ENCODE measurements at regions of chr21 and their contacts with region 1.

Region 1: GRCh38 chr21:14523234-14523633 is 22.9 kb downstream of the SAMSN1 start:
- DNase-seq: peak; percentile 35
- H3K4me3 Mint-ChIP-seq: peak overlapping the region; percentile 68
- H3K27ac Mint-ChIP-seq: peak overlapping the region; percentile 91
- H3K4me1 Mint-ChIP-seq: peaks cover 72% of the 10 kb centered on the region
- H3K27me3 Mint-ChIP-seq: no peaks in the 10 kb centered on the region

Region 2: GRCh38 chr21:14382835-14383594 is 140.2 kb before region 1 on chr21 and contains the start of gene HSPA13:
- intact Hi-C with region 1: loop called (anchors 2 kb)
- DNase-seq: peak; percentile 99
- H3K4me3 Mint-ChIP-seq: peak within 1 kb of the TSS; percentile 100
- H3K27ac Mint-ChIP-seq: peak within 1 kb of the TSS; percentile 100
- H3K4me1 Mint-ChIP-seq: peaks cover 52% of the 10 kb centered on the region
- H3K27me3 Mint-ChIP-seq: peaks cover 2% of the 10 kb centered on the region
- total RNA-seq, gene HSPA13: 43.6 and 50.4 TPM in 2 replicates

Region 3: DNA sequence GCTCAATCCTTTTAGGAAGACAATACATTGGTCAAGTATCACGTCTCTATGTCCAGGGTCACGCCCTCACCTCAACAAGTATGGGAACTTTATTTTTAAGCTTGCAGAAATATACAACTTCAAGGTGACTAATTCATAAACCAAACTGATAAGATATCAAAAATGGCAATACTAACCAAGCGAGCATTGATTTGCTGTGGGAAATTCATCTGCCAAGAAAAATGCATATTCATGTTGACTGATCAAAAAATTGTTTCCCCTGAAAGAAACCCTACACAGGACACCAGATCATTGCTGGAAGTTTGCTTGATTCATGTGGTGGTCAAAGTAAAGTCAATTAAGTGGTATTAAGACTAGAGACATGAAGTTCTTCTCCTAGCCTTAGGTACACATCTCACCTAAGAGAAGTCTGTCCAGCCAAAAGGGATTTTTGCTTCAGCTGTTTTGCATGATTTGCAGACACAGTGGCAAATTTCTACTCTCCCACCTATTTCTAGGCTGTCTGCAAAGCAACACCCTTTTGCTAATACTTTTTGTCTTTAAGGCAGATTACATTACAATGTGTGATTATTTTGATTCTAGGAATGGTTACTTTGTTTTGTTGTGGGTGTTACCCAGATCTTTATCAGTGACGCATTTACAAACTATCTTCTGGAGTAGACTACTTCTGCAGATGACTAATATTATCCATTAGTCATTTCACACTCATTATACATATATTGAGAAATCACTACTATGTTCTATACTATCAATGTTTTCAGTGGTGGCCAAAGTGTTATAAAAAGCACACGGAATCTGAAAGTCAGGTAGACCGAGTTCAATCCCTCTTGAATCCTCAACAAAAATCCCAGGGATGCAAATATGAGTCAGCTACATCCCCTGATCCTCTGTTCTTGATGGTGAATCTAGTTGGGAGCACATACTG is 10.5 kb after region 1 on chr21:
- intact Hi-C with region 1: loop called (anchors 1 kb)
- DNase-seq: peak; percentile 22
- H3K4me3 Mint-ChIP-seq: peak overlapping the region; percentile 86
- H3K27ac Mint-ChIP-seq: peak overlapping the region; percentile 99
- H3K4me1 Mint-ChIP-seq: peaks cover 79% of the 10 kb centered on the region
- H3K27me3 Mint-ChIP-seq: no peaks in the 10 kb centered on the region

Region 4: GRCh38 chr21:14591882-14592281 is 68.6 kb after region 1 on chr21:
- intact Hi-C with region 1: loop called (anchors 1 kb)
- DNase-seq: no peak
- H3K4me3 Mint-ChIP-seq: no peak overlapping the region
- H3K27ac Mint-ChIP-seq: peak overlapping the region; percentile 83
- H3K4me1 Mint-ChIP-seq: peaks cover 54% of the 10 kb centered on the region
- H3K27me3 Mint-ChIP-seq: no peaks in the 10 kb centered on the region

Region 5: DNA sequence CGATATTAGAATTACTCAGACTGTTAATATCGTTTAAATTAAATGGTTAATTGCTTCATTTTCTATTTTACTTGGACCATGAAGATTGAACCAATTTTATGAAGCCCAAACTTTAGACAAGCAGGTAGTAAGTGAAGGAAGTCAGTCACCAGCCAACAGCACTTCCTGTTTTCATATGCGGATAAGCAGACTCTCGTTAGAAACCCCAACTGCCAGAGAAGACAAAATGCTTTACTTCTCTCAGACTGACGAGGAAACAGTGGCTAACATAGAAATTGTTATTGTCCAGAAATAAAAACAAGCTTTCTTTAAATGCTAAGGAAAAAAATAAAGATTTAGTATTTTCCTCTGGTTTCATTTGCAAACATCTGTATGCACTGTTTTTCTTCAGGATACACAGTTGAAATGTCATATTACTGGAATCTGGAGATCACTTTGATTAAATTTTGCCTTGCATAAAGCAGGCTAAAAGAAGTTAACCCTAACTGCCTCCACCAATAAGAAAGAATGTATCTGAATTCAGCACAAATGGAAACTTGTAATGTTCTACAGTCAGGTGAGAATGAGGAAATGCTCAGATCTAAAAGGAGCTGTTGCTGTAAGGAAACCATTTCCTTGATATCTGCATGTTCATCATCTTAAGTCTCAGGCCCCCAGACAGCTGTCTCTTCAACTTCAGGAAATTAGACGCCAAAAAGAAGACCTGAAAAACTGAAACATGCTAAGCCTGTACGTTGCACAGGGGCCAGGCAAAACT is 152.7 kb after region 1 on chr21:
- intact Hi-C with region 1: loop called (anchors 5 kb)
- DNase-seq: no peak
- H3K4me3 Mint-ChIP-seq: peak overlapping the region; percentile 74
- H3K27ac Mint-ChIP-seq: peak overlapping the region; percentile 97
- H3K4me1 Mint-ChIP-seq: peaks cover 49% of the 10 kb centered on the region
- H3K27me3 Mint-ChIP-seq: no peaks in the 10 kb centered on the region

Region 6: DNA sequence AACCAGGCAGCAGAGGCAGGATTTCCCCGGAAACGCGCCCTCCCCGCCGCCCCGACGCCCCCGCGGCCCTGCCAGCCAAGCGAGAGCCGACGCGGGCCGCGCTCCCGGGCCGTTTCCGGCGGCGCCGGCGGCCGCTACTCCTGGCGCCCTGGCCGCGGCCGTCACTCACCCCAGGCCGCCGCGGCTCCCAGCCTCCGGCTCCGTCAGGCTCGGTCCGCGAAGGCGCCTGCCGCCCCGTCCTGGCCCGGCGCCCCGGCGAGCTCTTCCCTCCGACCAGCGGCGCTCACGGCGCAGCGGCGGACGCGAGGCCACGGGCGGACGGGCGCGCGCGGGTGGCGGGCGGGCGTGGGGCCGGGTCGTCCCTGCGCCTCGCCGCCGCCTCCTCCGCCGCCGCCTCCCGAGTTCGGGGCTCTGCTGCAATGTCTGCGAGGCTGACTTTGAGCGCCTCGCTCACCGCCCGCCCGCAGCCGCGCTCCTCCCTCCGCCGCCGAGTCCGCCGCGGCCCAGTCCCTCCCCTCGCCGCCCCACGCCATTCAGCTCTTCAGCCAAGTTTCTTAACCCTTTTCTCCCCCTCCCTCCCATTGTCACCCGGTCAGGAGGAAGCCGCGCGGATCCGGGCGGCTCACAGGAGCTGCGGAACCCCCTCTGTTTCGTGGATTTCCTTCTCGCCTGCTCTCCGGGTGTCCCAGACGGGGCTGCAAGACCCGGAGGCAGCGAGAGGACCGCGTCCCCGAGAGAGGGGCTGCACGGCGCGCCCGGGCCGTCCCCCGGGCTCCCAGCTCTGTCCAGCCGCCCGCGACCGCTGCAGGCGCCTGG is 541.5 kb after region 1 on chr21 and contains the start of gene NRIP1:
- intact Hi-C with region 1: loop called (anchors 1 kb)
- DNase-seq: peak; percentile 80
- H3K4me3 Mint-ChIP-seq: peak within 1 kb of the TSS; percentile 93
- H3K27ac Mint-ChIP-seq: peak within 1 kb of the TSS; percentile 88
- H3K4me1 Mint-ChIP-seq: peaks cover 52% of the 10 kb centered on the region
- H3K27me3 Mint-ChIP-seq: peaks cover 25% of the 10 kb centered on the region
- total RNA-seq, gene NRIP1: 11.4 and 11.7 TPM in 2 replicates

Region 7: GRCh38 chr21:15729674-15730483 is 1206.6 kb after region 1 on chr21 and contains the start of gene USP25:
- intact Hi-C with region 1: loop called (anchors 10 kb)
- DNase-seq: peak; percentile 80
- H3K4me3 Mint-ChIP-seq: peak within 1 kb of the TSS; percentile 93
- H3K27ac Mint-ChIP-seq: peak within 1 kb of the TSS; percentile 91
- H3K4me1 Mint-ChIP-seq: peaks cover 40% of the 10 kb centered on the region
- H3K27me3 Mint-ChIP-seq: peaks cover 31% of the 10 kb centered on the region
- total RNA-seq, gene USP25: 25.6 and 26.8 TPM in 2 replicates

Measured in activated T-helper 1 cell treated with anti-CD3 and anti-CD28 coated beads, Interleukin-12 subunit alpha, Interleukin-12 subunit beta, Interleukin-2, Interleukin-4 antibody, amounts not matched to agents 30 ng/mL and 10 ng/mL and 1 ng/mL, durations not matched to agents 14 hours and 24 hours and 36 hours (primary cell).